ENCODE measurements at regions of chr7 and their contacts with region 1.

Region 1: GRCh38 chr7:39465055-39465929 is 100.9 kb upstream of the YAE1 start:
- DNase-seq: peak; percentile 53
- H3K4me3 Mint-ChIP-seq: no peak overlapping the region
- H3K27ac Mint-ChIP-seq: no peak overlapping the region
- H3K4me1 Mint-ChIP-seq: no peaks in the 10 kb centered on the region
- H3K27me3 Mint-ChIP-seq: peaks cover 9% of the 10 kb centered on the region

Region 2: DNA sequence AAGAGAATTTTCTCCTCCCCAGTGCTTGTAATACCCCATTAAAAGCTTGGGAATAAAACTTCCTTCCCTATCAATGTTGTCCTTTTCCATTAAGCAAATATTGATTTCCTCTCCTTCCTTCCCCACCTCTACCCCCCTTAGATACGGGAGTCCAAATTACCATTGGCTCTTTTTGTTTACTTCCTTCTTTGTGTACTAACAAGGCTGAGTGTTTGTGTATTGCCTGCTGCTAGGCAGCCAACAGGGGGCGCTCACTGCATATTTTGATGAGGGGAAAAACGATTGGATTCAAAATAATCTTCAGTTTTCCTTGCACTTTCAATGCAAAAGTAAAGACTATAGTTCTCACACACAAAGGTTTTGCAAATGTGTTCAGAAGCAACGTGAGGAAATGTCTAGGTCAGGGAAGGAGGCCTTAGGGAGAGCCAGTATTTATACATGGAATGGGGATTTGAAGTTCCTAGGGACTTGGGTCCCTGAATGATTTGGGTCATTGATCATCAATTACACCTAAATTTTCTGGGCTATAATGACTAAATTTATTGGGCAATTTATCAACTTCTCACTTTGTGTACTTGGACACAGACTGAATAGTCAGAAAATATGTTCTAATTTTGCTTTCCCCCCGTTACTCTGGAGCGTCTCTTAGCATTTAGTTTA is 532.7 kb before region 1 on chr7:
- CTCF ChIA-PET with region 1: interaction called, 3 read pairs
- POLR2A ChIA-PET with region 1: no interaction called
- intact Hi-C with region 1: loop called (anchors 1 kb)
- DNase-seq: peak; percentile 65
- H3K4me3 Mint-ChIP-seq: no peak overlapping the region
- H3K27ac Mint-ChIP-seq: no peak overlapping the region
- H3K4me1 Mint-ChIP-seq: no peaks in the 10 kb centered on the region
- H3K27me3 Mint-ChIP-seq: peaks cover 5% of the 10 kb centered on the region

Region 3: GRCh38 chr7:39527296-39527695 is 62.0 kb after region 1 on chr7:
- CTCF ChIA-PET with region 1: no interaction called
- POLR2A ChIA-PET with region 1: no interaction called
- intact Hi-C with region 1: loop called (anchors 5 kb)
- DNase-seq: no peak
- H3K4me3 Mint-ChIP-seq: no peak overlapping the region
- H3K27ac Mint-ChIP-seq: no peak overlapping the region
- H3K4me1 Mint-ChIP-seq: no peaks in the 10 kb centered on the region
- H3K27me3 Mint-ChIP-seq: peaks cover 2% of the 10 kb centered on the region

Measured in activated CD4-positive, alpha-beta memory T cell treated with anti-CD3 and anti-CD28 coated beads for 36 hours (primary cell).